Right ventricle myocardium superior (tissue), 1 donor: ENCODE measurements at regions of chr1 and their contacts with region 1.

Region 1: GRCh38 chr1:46132529-46133180 is at the start of gene PIK3R3:
- DNase-seq: peak; percentile 98
- ATAC-seq: peak; percentile 98
- total RNA-seq, gene PIK3R3: 26.9 TPM

Region 2: GRCh38 chr1:46043458-46044017 is 89.1 kb before region 1 on chr1:
- intact Hi-C with region 1: loop called (anchors 10 kb)
- DNase-seq: no peak
- ATAC-seq: no peak

Region 3: GRCh38 chr1:46173361-46173856 is 40.8 kb after region 1 on chr1:
- intact Hi-C with region 1: loop called (anchors 5 kb)
- DNase-seq: no peak
- ATAC-seq: peak; percentile 7